ENCODE measurements at regions of chr3 and their contacts with region 1.

Region 1: GRCh38 chr3:64030741-64031140 is 7.4 kb upstream of the PSMD6 start:
- DNase-seq: peak; percentile 45 to 77 (median 67)
- ATAC-seq: peak; percentile 99
- H3K4me3 ChIP-seq: peak overlapping the region; percentile 40
- H3K4me3 Mint-ChIP-seq: peak overlapping the region; percentile 71 to 87 (median 81)
- H3K27ac ChIP-seq: no peak overlapping the region
- H3K27ac Mint-ChIP-seq: peak overlapping the region in 7 of 9 donors; percentile 28 to 84 (median 69)
- H3K4me1 ChIP-seq: no peaks in the 10 kb centered on the region
- H3K4me1 Mint-ChIP-seq: peaks cover 0 to 7% (median 6%) of the 10 kb centered on the region in 7 donors
- H3K27me3 ChIP-seq: peaks cover 0 to 3% of the 10 kb centered on the region in 2 donors
- H3K27me3 Mint-ChIP-seq: peaks cover 8 to 52% (median 31%) of the 10 kb centered on the region in 5 donors

Region 2: DNA sequence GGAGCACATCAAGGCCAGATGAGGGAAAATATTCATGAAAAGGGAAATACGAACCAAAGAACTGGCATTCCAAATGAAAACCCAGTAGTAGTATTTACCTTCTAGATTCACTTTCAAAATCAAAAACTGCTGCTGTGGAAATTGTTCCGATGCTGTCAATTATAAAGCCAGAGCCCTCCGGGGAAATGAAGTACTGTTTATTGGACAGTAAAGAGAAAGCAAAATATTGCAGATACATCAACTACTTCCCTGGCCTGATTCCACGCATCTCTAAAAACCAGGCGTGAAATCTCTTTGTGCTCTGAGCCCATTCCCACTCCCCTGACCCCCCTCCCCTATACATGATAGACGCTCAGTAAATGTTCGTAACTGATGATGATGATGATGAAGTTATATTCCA is 244.9 kb before region 1 on chr3:
- CTCF ChIA-PET with region 1: no interaction called
- POLR2A ChIA-PET with region 1: no interaction called
- intact Hi-C with region 1: no loop called
- DNase-seq: no peak
- ATAC-seq: no peak
- H3K4me3 ChIP-seq: no peak overlapping the region
- H3K4me3 Mint-ChIP-seq: no peak overlapping the region
- H3K27ac ChIP-seq: no peak overlapping the region
- H3K27ac Mint-ChIP-seq: no peak overlapping the region
- H3K4me1 ChIP-seq: no peaks in the 10 kb centered on the region
- H3K4me1 Mint-ChIP-seq: no peaks in the 10 kb centered on the region
- H3K27me3 ChIP-seq: no peaks in the 10 kb centered on the region
- H3K27me3 Mint-ChIP-seq: peaks cover 0 to 4% (median 0%) of the 10 kb centered on the region in 5 donors

Region 3: DNA sequence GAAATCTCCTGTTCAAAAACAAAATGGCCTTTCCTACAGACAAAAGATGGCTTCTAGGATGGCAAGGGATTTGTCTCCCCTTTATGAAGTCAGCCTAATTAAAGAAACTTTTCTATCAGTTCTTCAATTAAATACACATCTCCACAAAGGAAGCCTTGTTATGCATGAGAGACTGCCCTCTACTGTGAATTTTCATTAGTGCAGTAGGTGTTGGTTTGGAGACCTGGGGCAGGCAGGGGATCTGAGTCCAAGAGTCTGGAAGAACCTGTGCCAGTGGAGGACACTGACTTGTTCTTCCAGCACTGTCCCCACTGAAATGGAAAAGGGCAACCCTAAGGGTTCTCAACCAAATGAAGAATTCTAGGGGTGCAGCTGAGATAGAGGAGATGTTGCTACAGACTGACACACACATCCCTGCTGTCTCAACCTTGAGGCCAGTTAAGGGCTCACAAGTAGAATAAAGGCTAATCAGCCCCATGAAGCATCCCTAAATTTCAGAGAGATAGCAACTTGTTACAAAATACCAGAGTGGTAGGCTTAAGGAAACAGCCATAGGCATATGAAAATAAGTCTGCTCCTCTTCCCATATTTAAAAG is 368.6 kb after region 1 on chr3:
- CTCF ChIA-PET with region 1: interaction called, 6 read pairs
- POLR2A ChIA-PET with region 1: no interaction called
- intact Hi-C with region 1: loop called in 1 of 2 experiments (anchors 1 kb)
- DNase-seq: peak in 5 of 9 donors; percentile 2 to 17 (median 9)
- ATAC-seq: peak; percentile 34
- H3K4me3 ChIP-seq: no peak overlapping the region
- H3K4me3 Mint-ChIP-seq: no peak overlapping the region
- H3K27ac ChIP-seq: no peak overlapping the region
- H3K27ac Mint-ChIP-seq: no peak overlapping the region
- H3K4me1 ChIP-seq: no peaks in the 10 kb centered on the region
- H3K4me1 Mint-ChIP-seq: peaks cover 0 to 2% (median 0%) of the 10 kb centered on the region in 7 donors
- H3K27me3 ChIP-seq: no peaks in the 10 kb centered on the region
- H3K27me3 Mint-ChIP-seq: peaks cover 0 to 9% (median 0%) of the 10 kb centered on the region in 5 donors

Region 4: GRCh38 chr3:64463981-64464380 is 433.2 kb after region 1 on chr3:
- CTCF ChIA-PET with region 1: interaction called, 3 read pairs
- POLR2A ChIA-PET with region 1: no interaction called
- intact Hi-C with region 1: loop called in 1 of 2 experiments (anchors 1 kb)
- DNase-seq: no peak
- ATAC-seq: no peak
- H3K4me3 ChIP-seq: no peak overlapping the region
- H3K4me3 Mint-ChIP-seq: no peak overlapping the region
- H3K27ac ChIP-seq: no peak overlapping the region
- H3K27ac Mint-ChIP-seq: no peak overlapping the region
- H3K4me1 ChIP-seq: no peaks in the 10 kb centered on the region
- H3K4me1 Mint-ChIP-seq: peaks cover 0 to 16% (median 5%) of the 10 kb centered on the region in 7 donors
- H3K27me3 ChIP-seq: no peaks in the 10 kb centered on the region
- H3K27me3 Mint-ChIP-seq: peaks cover 2 to 57% (median 19%) of the 10 kb centered on the region in 5 donors

Region 5: GRCh38 chr3:64484289-64484992 is 453.7 kb after region 1 on chr3:
- CTCF ChIA-PET with region 1: interaction called, 7 read pairs
- POLR2A ChIA-PET with region 1: no interaction called
- intact Hi-C with region 1: loop called in 1 of 2 experiments (anchors 1 kb)
- DNase-seq: peak; percentile 18 to 64 (median 46)
- ATAC-seq: peak; percentile 82
- H3K4me3 ChIP-seq: no peak overlapping the region
- H3K4me3 Mint-ChIP-seq: no peak overlapping the region
- H3K27ac ChIP-seq: no peak overlapping the region
- H3K27ac Mint-ChIP-seq: peak overlapping the region in 1 of 9 donors; percentile 37
- H3K4me1 ChIP-seq: no peaks in the 10 kb centered on the region
- H3K4me1 Mint-ChIP-seq: peaks cover 0 to 10% (median 0%) of the 10 kb centered on the region in 7 donors
- H3K27me3 ChIP-seq: no peaks in the 10 kb centered on the region
- H3K27me3 Mint-ChIP-seq: peaks cover 15 to 22% (median 19%) of the 10 kb centered on the region in 5 donors

Region 6: DNA sequence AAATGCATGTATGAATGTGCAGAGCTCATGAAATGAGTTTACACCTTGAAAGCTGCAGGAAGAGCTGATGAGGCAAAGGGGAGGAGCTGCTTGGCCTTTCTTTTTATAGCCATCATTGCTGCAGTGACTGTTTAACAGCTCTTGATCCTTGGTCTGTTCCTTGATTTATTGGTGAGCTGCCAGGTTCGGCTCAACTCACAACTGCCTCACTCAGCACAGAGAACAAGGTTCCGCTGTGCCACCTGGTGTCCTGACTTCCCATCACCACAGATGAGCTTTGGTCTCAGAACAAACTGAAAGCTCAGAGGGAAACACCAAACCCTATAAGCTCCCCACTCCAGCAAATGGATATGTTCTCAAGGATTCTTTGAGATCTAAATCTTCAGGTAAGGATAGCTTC is 1381.8 kb after region 1 on chr3:
- CTCF ChIA-PET with region 1: no interaction called
- POLR2A ChIA-PET with region 1: no interaction called
- intact Hi-C with region 1: loop called in 1 of 2 experiments (anchors 5 kb)
- DNase-seq: no peak
- ATAC-seq: no peak
- H3K4me3 ChIP-seq: no peak overlapping the region
- H3K4me3 Mint-ChIP-seq: no peak overlapping the region
- H3K27ac ChIP-seq: no peak overlapping the region
- H3K27ac Mint-ChIP-seq: no peak overlapping the region
- H3K4me1 ChIP-seq: no peaks in the 10 kb centered on the region
- H3K4me1 Mint-ChIP-seq: no peaks in the 10 kb centered on the region
- H3K27me3 ChIP-seq: no peaks in the 10 kb centered on the region
- H3K27me3 Mint-ChIP-seq: no peaks in the 10 kb centered on the region

Measured in naive thymus-derived CD4-positive, alpha-beta T cell (primary cell).